Activated CD4-positive, alpha-beta T cell treated with anti-CD3 and anti-CD28 coated beads for 36 hours (primary cell): ENCODE measurements at regions of chr5 and their contacts with region 1.

Region 1: GRCh38 chr5:73448463-73449136 is at the start of gene FOXD1:
- DNase-seq: peak; percentile 76
- ATAC-seq: peak; percentile 83
- H3K4me3 Mint-ChIP-seq: peak within 1 kb of the TSS; percentile 75
- H3K27ac Mint-ChIP-seq: peak within 1 kb of the TSS; percentile 31
- H3K4me1 Mint-ChIP-seq: peaks cover 8% of the 10 kb centered on the region
- H3K27me3 Mint-ChIP-seq: peaks cover 71% of the 10 kb centered on the region
- total RNA-seq, gene FOXD1: 0.23 to 0.48 TPM

Region 2: GRCh38 chr5:72955768-72956323 is 492.8 kb before region 1 on chr5 and contains the start of gene FCHO2:
- CTCF ChIA-PET with region 1: no interaction called
- POLR2A ChIA-PET with region 1: no interaction called
- intact Hi-C with region 1: loop called (anchors 1 to 10 kb)
- DNase-seq: peak; percentile 98
- ATAC-seq: peak; percentile 96
- H3K4me3 Mint-ChIP-seq: peak within 1 kb of the TSS; percentile 79
- H3K27ac Mint-ChIP-seq: peak within 1 kb of the TSS; percentile 74
- H3K4me1 Mint-ChIP-seq: peaks cover 9% of the 10 kb centered on the region
- H3K27me3 Mint-ChIP-seq: peaks cover 41% of the 10 kb centered on the region
- total RNA-seq, gene FCHO2: 0.86 to 1.3 TPM

Region 3: DNA sequence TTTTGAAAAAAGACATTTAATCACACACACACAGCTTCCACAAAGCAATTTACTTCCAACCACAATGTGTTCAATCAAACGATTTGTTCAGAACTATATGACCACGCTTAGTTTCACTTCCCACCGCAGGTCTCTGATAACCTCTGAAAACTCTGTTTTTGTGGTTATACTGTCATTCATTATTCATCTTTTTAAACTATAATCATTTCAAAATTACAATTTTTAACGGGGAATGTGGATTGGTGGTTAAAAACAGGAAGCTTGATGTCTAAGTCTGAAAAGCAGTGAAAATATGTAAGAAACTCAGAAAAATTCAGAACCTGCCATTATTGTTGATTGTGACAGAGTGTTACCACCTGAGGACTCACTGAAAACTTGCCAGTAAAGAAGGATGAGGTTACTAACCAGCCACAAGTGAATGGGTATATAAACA is 288.3 kb before region 1 on chr5:
- CTCF ChIA-PET with region 1: no interaction called
- POLR2A ChIA-PET with region 1: no interaction called
- intact Hi-C with region 1: loop called in 1 of 2 experiments (anchors 5 kb)
- DNase-seq: peak; percentile 89
- ATAC-seq: peak; percentile 91
- H3K4me3 Mint-ChIP-seq: no peak overlapping the region
- H3K27ac Mint-ChIP-seq: no peak overlapping the region
- H3K4me1 Mint-ChIP-seq: peaks cover 36% of the 10 kb centered on the region
- H3K27me3 Mint-ChIP-seq: peaks cover 73% of the 10 kb centered on the region

Region 4: GRCh38 chr5:73233347-73234200 is 215.0 kb before region 1 on chr5:
- CTCF ChIA-PET with region 1: no interaction called
- POLR2A ChIA-PET with region 1: no interaction called
- intact Hi-C with region 1: loop called (anchors 2 to 5 kb)
- DNase-seq: peak; percentile 23
- ATAC-seq: no peak
- H3K4me3 Mint-ChIP-seq: peak overlapping the region; percentile 10
- H3K27ac Mint-ChIP-seq: no peak overlapping the region
- H3K4me1 Mint-ChIP-seq: peaks cover 28% of the 10 kb centered on the region
- H3K27me3 Mint-ChIP-seq: peaks cover 62% of the 10 kb centered on the region

Region 5: DNA sequence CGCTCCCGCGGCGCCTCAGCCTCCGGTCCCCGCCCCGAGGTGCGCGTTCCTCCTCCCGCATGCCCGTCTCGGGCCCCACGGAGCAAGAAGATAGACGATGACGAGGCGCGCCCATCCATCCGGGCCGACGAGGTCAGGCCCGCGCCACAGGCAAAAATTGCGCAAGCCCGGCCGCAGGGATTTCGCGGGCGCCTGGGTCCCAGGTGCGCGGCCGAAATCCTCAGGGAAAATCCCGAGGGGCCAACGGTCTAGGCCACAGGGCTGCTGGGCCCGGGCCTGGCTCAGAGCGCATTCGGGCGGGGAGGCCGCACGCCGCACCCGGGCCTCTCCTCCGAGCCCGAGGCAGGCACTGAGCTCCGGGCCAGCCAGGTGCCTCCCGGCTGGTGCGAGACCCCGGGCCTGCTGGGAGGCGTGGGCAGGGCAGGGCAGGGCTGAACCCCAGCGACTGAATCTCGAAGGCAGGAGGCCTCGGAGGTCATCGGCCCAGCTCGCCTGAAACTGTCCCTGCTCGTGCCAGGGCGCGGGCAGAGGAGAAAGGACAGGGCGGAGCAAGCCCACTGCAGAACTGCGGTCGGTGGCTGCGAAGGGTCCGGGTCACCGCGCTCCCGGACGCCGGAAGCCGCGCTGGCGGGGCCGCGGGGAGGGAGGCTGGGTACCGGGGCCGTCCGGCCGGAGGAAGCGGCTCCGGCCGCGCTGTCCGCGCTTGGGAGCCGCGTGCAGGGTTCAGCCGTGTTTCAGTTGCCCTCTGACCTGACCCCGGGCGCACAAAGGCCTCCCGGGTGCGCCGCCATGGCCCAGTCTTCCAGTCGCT is 66.8 kb before region 1 on chr5:
- CTCF ChIA-PET with region 1: interaction called, 3 read pairs
- POLR2A ChIA-PET with region 1: interaction called, 3 read pairs
- intact Hi-C with region 1: loop called (anchors 2 kb)
- DNase-seq: peak; percentile 28
- ATAC-seq: no peak
- H3K4me3 Mint-ChIP-seq: no peak overlapping the region
- H3K27ac Mint-ChIP-seq: no peak overlapping the region
- H3K4me1 Mint-ChIP-seq: peaks cover 15% of the 10 kb centered on the region
- H3K27me3 Mint-ChIP-seq: peaks cover 66% of the 10 kb centered on the region

Region 6: DNA sequence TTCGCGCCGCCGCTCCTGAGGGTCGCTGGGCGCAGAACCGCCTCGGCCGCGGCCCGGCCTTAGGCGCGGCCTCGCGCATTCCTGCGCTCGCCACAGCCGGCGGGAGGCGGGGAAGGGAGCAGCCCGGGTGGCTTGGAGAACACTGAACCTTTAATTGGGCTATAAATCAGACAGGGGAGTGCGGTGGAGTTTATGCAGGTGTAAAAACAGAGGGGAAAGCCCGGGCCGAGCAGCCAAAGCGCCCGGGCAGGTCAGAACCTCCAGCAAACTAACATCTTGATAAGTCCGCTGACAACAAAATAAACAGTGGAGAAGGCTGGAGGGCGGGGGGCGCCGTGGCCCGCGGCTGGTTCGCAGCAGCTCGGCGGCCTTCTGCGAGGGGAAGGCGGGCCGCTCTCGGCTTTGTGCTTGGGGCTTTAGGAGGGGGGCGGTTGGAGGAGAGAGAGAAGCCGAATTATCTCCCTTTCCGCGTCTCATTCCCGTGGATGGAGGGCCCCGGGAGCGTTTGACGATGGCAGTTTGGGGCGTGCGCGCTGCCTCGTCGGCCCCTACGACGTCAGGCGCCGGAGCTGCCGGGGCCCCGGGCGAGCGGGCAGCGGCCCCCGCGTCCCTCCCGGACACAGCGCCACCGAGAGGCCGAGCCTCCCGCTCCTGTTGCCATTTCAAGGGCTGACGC is 11.4 kb before region 1 on chr5:
- CTCF ChIA-PET with region 1: interaction called, 7 read pairs
- POLR2A ChIA-PET with region 1: no interaction called
- intact Hi-C with region 1: loop called in 1 of 2 experiments (anchors 1 kb)
- DNase-seq: peak; percentile 49
- ATAC-seq: peak; percentile 36
- H3K4me3 Mint-ChIP-seq: peak overlapping the region; percentile 30
- H3K27ac Mint-ChIP-seq: no peak overlapping the region
- H3K4me1 Mint-ChIP-seq: peaks cover 12% of the 10 kb centered on the region
- H3K27me3 Mint-ChIP-seq: peaks cover 74% of the 10 kb centered on the region

Region 7: DNA sequence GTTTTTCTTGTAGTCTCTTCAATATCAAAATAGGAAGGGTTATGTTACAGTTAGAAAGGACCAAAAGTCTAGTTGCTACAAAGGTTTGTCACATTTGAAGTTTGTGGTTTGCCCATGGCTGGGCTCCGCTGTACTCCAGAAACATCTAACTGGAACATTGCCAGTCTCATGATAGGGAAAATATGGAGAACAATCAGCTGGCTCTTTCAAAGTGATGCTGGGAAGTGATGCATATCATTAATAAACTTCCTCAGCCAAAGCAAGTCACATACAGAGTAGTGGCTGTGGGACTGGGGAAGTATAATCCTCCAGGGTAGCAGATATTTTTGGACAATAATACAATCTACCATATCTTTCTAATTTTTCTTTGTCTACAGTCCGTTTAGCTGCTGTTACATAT is 58.5 kb after region 1 on chr5:
- CTCF ChIA-PET with region 1: no interaction called
- POLR2A ChIA-PET with region 1: no interaction called
- intact Hi-C with region 1: no loop called
- DNase-seq: no peak
- ATAC-seq: no peak
- H3K4me3 Mint-ChIP-seq: no peak overlapping the region
- H3K27ac Mint-ChIP-seq: no peak overlapping the region
- H3K4me1 Mint-ChIP-seq: peaks cover 9% of the 10 kb centered on the region
- H3K27me3 Mint-ChIP-seq: no peaks in the 10 kb centered on the region